ENCODE measurements at regions of chr10 and their contacts with region 1.

Region 1: DNA sequence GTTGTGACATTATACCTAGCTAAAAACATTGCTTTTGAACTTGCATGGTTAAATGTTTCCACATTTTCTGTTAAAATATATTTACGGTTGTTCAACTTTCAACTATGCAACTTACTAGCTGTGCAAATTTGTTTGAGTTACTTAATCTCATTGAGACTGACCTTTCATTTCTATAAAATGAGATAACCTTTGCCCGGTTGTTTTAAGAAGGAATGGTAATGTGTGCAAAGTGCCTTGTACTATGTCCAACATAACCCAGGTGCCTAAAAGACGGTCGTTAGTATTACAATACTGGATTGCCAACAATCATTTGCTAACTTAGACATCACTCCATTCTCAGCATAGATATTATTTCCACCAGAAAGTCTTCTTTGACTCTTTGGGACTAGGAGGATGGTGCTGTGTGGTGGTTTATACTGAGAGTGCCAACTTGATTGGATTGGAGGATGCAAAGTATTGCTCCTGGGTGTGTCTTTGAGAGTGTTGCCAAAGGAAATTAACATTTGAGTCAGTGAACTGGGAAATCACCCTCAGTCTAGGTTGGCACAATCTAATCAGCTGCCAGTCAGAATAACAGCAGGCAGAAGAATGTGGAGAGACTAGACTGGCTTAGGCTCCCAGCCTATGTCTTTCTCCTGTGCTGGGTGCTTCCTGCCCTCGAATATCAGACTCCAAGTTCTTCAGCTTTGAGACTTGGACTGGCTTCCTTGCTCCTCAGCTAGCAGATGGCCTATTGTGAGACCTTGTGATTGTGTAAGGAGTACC is 85.2 kb upstream of the PDSS1 start:
- DNase-seq: no peak
- H3K4me3 Mint-ChIP-seq: no peak overlapping the region
- H3K27ac Mint-ChIP-seq: no peak overlapping the region
- H3K4me1 Mint-ChIP-seq: no peaks in the 10 kb centered on the region
- H3K27me3 Mint-ChIP-seq: peaks cover 18% of the 10 kb centered on the region

Region 2: DNA sequence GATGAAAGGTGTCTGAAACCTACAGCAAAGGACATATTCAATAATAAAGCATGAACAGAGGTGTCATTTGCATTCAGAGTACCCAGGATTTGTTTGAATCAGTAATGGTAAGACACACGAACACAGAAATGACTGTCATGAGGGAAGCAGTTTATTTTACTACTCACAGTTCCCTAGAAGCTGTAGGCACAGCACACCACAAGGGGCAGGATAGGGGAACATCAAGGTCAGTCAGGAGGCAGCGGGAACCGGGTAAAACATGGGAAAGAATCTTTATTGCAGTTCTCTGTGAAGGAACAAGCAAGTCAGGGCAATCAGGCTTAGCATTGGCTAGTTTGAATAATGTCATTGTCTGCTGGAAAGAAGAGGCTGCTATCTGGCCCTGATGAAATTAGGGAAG is 15.0 kb after region 1 on chr10:
- CTCF ChIA-PET with region 1: no interaction called
- POLR2A ChIA-PET with region 1: no interaction called
- DNase-seq: no peak
- H3K4me3 Mint-ChIP-seq: no peak overlapping the region
- H3K27ac Mint-ChIP-seq: no peak overlapping the region
- H3K4me1 Mint-ChIP-seq: peaks cover 5% of the 10 kb centered on the region
- H3K27me3 Mint-ChIP-seq: peaks cover 44% of the 10 kb centered on the region

Region 3: GRCh38 chr10:26733750-26734568 is 121.6 kb after region 1 on chr10:
- CTCF ChIA-PET with region 1: no interaction called
- POLR2A ChIA-PET with region 1: no interaction called
- DNase-seq: no peak
- H3K4me3 Mint-ChIP-seq: no peak overlapping the region
- H3K27ac Mint-ChIP-seq: peak overlapping the region; percentile 14
- H3K4me1 Mint-ChIP-seq: peaks cover 39% of the 10 kb centered on the region
- H3K27me3 Mint-ChIP-seq: no peaks in the 10 kb centered on the region

Region 4: GRCh38 chr10:26881600-26882331 is 269.4 kb after region 1 on chr10:
- CTCF ChIA-PET with region 1: interaction called, 11 read pairs
- POLR2A ChIA-PET with region 1: no interaction called
- DNase-seq: no peak
- H3K4me3 Mint-ChIP-seq: no peak overlapping the region
- H3K27ac Mint-ChIP-seq: no peak overlapping the region
- H3K4me1 Mint-ChIP-seq: peaks cover 7% of the 10 kb centered on the region
- H3K27me3 Mint-ChIP-seq: peaks cover 30% of the 10 kb centered on the region